ENCODE measurements at regions of chr5 and their contacts with region 1.

Region 1: GRCh38 chr5:67809589-67809988 is 406.0 kb upstream of the PIK3R1 start:
- DNase-seq: no peak
- H3K4me3 ChIP-seq: no peak overlapping the region
- H3K27ac ChIP-seq: peak overlapping the region in 1 of 2 donors; percentile 54
- H3K4me1 ChIP-seq: peaks cover 0 to 65% (median 39%) of the 10 kb centered on the region in 4 donors
- H3K27me3 ChIP-seq: no peaks in the 10 kb centered on the region
- CTCF ChIP-seq: no peak

Region 2: DNA sequence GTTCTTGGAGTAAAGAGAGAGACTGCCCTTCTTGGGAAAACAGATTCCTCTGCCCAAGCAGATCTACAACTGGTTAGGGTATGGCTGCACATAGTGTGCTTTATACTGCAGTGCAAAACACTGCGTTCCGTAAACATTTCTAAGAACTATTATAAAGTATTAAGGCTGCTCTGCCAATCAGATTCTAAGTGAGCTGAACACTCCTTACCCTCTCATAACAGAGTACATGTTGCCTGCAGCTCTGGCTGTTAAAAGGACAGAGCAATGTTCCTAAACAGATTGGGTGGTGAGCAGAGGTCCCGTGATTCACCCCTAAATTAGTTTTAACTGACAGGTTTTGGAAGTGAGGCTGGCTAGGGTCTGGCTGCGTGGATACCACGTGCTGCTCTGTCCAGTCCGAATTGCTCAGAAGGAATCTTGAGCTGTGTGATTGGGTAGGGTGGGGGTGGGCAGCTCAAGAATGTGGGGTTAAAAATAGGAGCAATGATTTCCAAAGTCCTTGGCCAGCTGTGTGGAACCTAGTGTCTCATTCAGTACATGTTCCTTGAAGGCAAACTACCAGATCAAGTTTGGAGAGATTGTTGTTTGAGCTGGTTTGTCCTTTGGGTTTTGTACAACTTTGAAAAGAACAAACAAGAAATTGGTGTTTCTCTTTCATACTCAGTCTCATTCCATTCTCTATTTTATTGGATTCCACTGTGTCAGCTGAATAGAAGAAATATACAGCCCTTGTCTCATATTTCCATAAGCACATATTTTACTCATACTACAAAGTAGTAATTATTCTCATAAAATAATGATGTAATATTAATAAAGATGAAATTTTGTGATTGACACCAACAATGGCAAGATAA is 115.4 kb before region 1 on chr5:
- intact Hi-C with region 1: loop called (anchors 10 kb)
- DNase-seq: peak; percentile 93 to 96
- H3K4me3 ChIP-seq: no peak overlapping the region
- H3K27ac ChIP-seq: peak overlapping the region; percentile 81 to 83
- H3K4me1 ChIP-seq: peaks cover 0 to 37% (median 26%) of the 10 kb centered on the region in 4 donors
- H3K27me3 ChIP-seq: no peaks in the 10 kb centered on the region
- CTCF ChIP-seq: no peak

Measured in tibial artery (tissue), 4 donors.